H1 (cell line): ENCODE measurements at regions of chr17 and their contacts with region 1.

Region 1: DNA sequence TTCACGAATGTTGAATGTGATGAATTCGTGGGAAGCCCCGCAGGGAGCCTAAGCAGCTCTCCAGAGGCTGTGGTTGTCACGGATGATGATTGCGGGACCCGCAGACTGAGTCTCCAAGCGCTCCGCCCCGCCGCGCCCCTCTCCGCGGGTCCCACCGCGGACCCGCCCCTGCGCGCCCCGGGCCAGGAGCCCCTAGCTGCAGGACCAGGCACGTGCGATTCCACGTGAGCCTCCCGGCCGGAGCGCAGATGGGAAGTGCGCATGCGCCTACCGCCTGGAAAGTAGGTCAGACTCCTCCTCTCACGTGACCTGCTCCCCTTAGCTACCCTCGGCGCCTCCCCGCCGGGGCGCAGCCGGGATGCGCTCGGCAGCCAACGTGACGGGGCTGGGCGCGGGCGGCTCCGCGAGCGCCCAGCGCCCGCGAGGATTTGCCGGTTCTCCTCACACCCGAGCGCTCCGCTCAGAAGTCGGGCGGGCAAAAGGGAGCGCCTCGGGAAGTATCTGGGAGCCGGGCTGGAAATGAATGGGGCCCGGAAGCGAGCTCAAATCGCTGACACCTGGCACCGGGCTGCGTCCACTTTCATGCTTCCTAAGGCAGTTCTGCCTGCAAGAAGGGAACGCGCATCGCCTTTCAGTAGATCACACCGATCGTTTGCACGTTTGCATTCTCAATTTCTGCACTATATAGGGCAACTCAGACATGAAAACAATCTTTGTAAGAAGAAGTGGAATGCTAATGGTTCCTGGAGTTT is 26.4 kb upstream of the HLF start:
- DNase-seq: peak; percentile 89 to 98
- H3K4me3 ChIP-seq: peak overlapping the region; percentile 51 to 71 (median 64)
- H3K27ac ChIP-seq: no peak overlapping the region
- H3K4me1 ChIP-seq: peaks cover 0 to 3% (median 0%) of the 10 kb centered on the region in 4 experiments; a peak in 2 of 7 replicates
- H3K27me3 ChIP-seq: peaks cover 0 to 5% (median 2%) of the 10 kb centered on the region in 4 experiments; a peak in 3 of 7 replicates
- CTCF ChIP-seq: no peak
- EP300 ChIP-seq: no peak; a peak in 1 of 3 replicates
- POLR2A ChIP-seq: peak in 1 of 2 experiments; percentile 55; a peak in 1 of 3 replicates
- RAD21 ChIP-seq: no peak; a peak in 1 of 4 replicates

Region 2: GRCh38 chr17:55264645-55265298 is 26.4 kb after region 1 on chr17 and contains the start of gene HLF:
- CTCF ChIA-PET with region 1: interaction called, 11 read pairs
- POLR2A ChIA-PET with region 1: interaction called, 9 read pairs
- DNase-seq: peak; percentile 23 to 75
- H3K4me3 ChIP-seq: peak within 1 kb of the TSS; percentile 31 to 70 (median 40)
- H3K27ac ChIP-seq: no peak within 1 kb of the TSS
- H3K4me1 ChIP-seq: peaks cover 0 to 14% (median 7%) of the 10 kb centered on the region in 4 experiments; a peak in 4 of 7 replicates
- H3K27me3 ChIP-seq: peaks cover 19 to 56% (median 46%) of the 10 kb centered on the region in 4 experiments
- CTCF ChIP-seq: no peak
- EP300 ChIP-seq: no peak
- POLR2A ChIP-seq: no peak
- RAD21 ChIP-seq: no peak
- total RNA-seq, gene HLF: 0.38 and 0.60 TPM in 2 replicates